ENCODE measurements at regions of chr10 and their contacts with region 1.

Region 1: DNA sequence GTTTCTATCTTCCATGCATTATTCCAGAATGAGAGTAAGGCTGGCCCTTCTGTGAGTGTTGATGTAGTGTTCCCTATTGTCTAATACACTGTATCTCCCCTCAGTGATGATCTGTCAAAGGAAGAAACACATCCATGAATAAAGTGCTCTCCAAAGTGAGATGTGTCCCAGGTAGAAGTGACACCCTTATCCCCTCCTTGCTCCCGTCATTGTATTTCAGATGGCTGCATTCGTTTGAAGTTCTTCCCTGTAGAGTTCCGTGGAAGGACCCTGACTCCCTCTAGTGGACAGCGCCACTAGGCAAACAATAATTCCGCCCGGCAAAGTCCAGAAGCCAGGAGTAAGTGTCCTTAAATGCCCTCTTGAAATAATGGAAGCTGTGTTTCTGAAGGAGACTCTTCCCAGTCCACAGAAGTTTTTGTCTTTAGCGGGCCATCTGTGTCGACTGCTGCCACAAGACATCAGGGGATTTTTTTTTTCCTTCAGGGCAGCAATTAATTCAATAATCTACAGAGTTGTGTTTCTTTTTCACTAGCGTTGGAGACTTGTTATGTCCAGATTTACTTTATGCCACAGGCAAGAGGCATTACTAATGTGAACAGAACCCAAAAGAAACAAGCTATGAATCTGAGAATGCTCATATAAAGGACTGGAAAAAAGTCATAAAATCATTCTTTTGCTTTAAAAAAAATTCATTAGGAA is 64.6 kb downstream of the THNSL1 start:
- DNase-seq: peak; percentile 33
- ATAC-seq: peak; percentile 28
- H3K4me3 Mint-ChIP-seq: no peak overlapping the region
- H3K27ac Mint-ChIP-seq: no peak overlapping the region
- H3K4me1 Mint-ChIP-seq: no peaks in the 10 kb centered on the region
- H3K27me3 Mint-ChIP-seq: peaks cover 13% of the 10 kb centered on the region
- CTCF ChIP-seq: no peak

Region 2: DNA sequence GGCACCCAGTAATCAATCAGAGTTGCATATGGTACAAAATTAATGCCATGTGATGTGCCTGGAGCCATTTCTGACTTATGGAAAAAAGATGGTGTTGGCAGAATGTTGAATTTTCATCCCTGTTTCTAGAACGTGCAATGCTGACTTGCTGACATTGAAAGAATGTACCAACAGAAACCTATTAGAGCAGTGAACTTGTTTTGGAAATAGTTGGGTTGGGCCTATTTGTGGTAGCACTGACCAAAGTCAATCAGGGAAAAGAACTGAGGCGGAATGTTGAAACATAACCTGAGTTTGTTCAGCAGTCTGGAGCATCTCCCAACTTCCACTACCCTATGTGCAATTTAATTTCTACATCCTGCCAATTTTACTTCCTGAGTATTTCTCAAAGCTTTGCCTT is 883.8 kb before region 1 on chr10:
- CTCF ChIA-PET with region 1: no interaction called
- POLR2A ChIA-PET with region 1: no interaction called
- intact Hi-C with region 1: loop called (anchors 10 kb)
- DNase-seq: no peak
- ATAC-seq: no peak
- H3K4me3 Mint-ChIP-seq: no peak overlapping the region
- H3K27ac Mint-ChIP-seq: no peak overlapping the region
- H3K4me1 Mint-ChIP-seq: no peaks in the 10 kb centered on the region
- H3K27me3 Mint-ChIP-seq: peaks cover 4% of the 10 kb centered on the region
- CTCF ChIP-seq: no peak

Region 3: DNA sequence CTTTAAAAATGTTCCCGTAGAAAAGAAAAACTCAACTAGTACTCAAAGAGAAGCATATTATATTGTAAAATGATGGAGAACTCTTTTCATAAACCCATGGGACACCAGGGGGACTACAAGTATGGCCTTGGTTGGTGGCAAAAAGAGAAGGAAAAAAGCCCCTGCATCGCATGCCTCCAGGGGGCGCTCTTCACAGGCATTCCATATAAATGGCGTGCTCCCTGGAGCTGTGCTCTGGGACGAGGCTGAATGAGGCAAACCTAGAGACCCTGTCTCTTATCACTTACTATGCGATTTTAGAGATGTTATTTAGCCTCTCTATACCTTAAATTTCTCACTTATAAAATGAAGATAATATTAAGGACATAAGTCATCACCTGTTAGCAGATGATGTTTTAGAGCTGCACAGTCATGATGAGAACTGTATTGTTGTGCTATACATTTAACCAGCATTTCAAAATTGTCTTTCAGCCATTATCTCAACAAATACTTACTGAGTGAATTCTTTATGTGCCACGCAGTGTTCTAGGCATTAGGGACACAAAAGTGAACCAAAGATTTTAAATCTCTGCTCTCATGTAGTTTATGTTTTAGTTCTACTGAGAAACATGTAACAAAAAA is 463.1 kb before region 1 on chr10:
- CTCF ChIA-PET with region 1: interaction called, 20 read pairs
- POLR2A ChIA-PET with region 1: no interaction called
- intact Hi-C with region 1: loop called (anchors 1 kb)
- DNase-seq: no peak
- ATAC-seq: no peak
- H3K4me3 Mint-ChIP-seq: no peak overlapping the region
- H3K27ac Mint-ChIP-seq: no peak overlapping the region
- H3K4me1 Mint-ChIP-seq: peaks cover 3% of the 10 kb centered on the region
- H3K27me3 Mint-ChIP-seq: no peaks in the 10 kb centered on the region
- CTCF ChIP-seq: no peak

Measured in activated B cell treated with CpG ODN at 0.5 μM for 24 hours (primary cell).